Aorta (tissue), 5 donors: ENCODE measurements at regions of chr2 and their contacts with region 1.

Region 1: DNA sequence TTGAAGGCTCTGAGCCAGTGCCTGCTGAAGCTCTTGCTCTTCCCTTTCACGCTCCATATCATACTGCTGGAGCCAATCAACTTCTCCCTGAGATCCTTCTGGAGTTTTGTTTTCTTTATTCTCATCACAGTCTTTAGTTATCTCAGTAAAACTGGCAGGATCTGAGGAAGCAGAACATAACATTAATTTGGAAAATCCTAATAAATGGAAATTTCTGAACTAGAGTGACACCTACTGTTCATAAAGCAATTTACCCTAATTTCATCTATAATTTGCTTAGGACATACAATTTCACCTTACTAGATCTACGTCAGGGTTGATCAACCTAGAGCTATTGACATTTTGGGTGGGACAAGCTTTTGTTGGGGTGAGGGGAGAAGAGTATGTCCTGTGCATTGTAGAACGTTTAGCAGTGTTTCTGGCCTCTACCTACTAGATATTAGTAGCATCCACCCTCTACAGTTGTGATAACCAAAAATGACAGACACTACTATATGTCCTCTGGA is 47.1 kb downstream of the VIL1 start:
- DNase-seq: no peak
- ATAC-seq: peak; percentile 48
- H3K4me3 ChIP-seq: no peak overlapping the region
- H3K27ac ChIP-seq: no peak overlapping the region
- H3K4me1 ChIP-seq: no peaks in the 10 kb centered on the region
- H3K27me3 ChIP-seq: no peaks in the 10 kb centered on the region

Region 2: DNA sequence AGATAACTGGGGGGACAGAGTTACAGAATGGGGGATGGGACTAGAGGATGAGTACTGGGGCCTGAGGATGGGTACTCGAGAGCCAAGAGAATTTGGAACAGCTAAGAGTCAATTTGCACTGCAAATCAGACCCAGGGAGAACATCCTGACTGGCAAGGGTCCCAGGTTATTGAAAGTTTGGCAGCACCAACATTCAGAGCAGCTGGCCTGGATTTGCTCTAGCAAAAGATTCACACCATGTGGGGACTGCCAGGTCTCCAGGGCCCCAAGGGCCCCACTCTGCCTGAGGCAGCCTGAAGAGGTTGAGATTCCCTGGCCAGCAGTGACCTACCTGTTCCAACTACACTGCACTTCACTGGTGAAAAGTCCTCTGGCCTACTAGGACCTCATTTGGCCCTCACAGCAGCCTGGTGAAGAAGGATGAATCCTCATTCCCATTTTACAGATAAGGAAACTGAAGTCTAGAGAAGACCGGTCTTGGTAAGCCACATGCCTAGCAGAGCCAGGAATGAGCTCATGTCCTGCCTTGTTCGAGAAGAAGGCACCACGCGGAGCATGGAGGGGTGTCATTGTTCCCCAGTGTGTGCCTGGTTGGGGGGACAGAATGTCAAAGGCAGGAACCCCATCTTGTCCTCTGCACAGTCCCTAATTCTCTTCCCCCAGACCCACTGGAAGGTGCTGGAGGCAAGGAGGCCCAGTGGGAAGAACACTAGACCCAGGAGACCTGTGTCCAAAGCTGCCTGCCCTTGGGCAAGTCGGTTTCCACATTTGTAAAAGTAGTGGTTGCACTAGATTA is 721.9 kb before region 1 on chr2:
- intact Hi-C with region 1: no loop called
- DNase-seq: no peak
- ATAC-seq: no peak
- H3K4me3 ChIP-seq: no peak overlapping the region
- H3K27ac ChIP-seq: peak overlapping the region in 1 of 2 donors; percentile 1
- H3K4me1 ChIP-seq: peaks cover 2 to 9% of the 10 kb centered on the region in 2 donors
- H3K27me3 ChIP-seq: no peaks in the 10 kb centered on the region

Region 3: DNA sequence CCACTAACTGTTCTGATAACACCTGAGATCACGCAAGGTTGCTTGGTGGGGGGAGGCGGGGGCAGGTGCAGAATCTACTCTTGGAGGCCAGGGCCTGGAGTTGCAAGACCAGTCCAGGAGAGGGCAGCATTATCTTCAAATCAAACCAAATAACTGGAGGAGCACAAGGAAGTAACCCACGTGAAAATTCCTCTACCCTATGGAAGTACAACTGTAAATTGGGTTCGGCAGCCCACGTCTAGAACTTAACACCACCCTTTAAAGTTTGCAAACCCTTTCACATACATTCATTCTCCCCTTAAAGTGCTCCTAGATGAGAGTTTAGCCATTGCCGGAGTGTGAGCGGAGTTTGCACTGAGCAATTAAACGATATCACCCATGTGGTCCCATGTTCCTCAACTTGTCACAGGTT is 279.7 kb before region 1 on chr2:
- intact Hi-C with region 1: loop called (anchors 5 kb)
- DNase-seq: peak; percentile 70 to 83
- ATAC-seq: peak; percentile 89
- H3K4me3 ChIP-seq: no peak overlapping the region
- H3K27ac ChIP-seq: no peak overlapping the region
- H3K4me1 ChIP-seq: peaks cover 0 to 3% of the 10 kb centered on the region in 2 donors
- H3K27me3 ChIP-seq: no peaks in the 10 kb centered on the region

Region 4: DNA sequence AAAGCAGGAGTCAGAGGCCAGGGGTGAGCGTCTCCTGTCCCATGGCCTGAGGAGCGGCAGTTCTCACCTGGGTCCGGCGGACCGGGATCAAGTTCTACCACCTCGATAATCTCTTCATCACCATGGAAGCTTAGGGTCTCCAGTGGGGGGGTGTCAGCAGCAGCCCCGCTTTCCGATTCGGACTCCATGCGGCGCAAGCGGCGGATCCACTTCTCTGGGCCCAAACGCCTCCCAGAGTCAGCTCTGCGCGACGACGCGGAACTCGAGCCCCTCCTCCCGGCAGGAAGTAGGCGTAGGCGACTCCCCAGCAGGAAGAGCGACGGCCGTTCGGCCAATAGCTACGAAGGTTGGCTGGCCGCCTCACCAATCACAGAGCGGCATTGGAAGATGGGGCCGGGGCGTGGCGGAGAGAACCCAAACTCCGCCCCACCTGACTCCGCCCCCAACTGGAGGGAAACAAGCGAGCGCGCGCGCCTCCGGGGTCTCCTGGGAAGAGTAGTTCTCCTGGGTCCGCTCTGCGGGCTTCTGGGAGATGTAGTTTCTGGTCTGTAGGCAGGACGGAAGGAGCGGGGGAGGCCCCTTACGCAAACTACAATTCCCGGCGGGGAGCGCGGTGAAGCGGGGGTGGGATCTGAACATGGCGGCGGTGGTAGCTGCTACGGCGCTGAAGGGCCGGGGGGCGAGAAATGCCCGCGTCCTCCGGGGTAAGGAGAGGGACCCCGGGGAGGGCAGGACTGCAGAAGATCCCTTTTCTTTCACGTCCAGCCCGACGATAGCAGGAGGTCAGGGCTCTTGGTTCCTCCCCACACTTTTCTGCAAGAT is 196.0 kb before region 1 on chr2 and contains the starts of genes AAMP and PNKD:
- intact Hi-C with region 1: loop called (anchors 5 to 10 kb)
- DNase-seq: peak; percentile 100
- ATAC-seq: peak; percentile 97
- H3K4me3 ChIP-seq: peak within 1 kb of the TSS; percentile 74 to 92
- H3K27ac ChIP-seq: peak within 1 kb of the TSS in 1 of 2 donors; percentile 9
- H3K4me1 ChIP-seq: no peaks in the 10 kb centered on the region
- H3K27me3 ChIP-seq: no peaks in the 10 kb centered on the region
- total RNA-seq, gene AAMP: 50.8 to 54.7 TPM
- total RNA-seq, gene PNKD: 26.9 to 40.2 TPM

Region 5: DNA sequence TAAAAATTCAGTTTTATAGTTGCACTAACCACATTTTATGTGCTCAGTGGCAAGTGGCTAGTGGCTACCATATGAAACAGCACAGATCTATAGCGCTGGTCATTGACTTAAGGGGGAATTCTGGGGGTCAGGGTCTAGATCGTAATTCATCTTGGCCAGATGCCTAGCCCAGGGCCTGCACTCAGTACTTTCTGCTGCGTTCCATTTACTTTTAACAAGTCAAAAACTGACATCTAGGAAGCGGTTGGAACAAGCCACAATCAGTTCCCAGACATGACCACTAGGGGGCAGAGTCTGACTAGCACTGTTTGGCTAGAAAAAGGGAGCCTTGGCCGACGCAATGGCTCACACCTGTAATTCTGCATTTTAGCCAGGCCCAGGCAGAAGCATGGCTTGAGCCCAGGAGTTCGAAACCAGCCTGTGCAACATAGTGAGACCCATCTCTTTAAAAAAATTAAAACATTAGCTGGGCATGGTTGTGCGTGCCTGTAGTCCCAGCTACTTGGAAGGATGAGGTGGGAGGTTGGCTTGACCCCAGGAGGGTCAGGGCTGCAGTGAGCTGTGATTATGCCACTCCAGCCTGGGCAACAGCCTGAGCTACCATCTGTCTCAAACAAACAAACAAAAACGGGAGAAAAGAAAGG is 164.8 kb before region 1 on chr2:
- intact Hi-C with region 1: loop called in 1 of 2 experiments (anchors 5 kb)
- DNase-seq: peak; percentile 87 to 88
- ATAC-seq: peak; percentile 87
- H3K4me3 ChIP-seq: no peak overlapping the region
- H3K27ac ChIP-seq: no peak overlapping the region
- H3K4me1 ChIP-seq: peaks cover 0 to 2% of the 10 kb centered on the region in 2 donors
- H3K27me3 ChIP-seq: no peaks in the 10 kb centered on the region

Region 6: GRCh38 chr2:218319813-218320365 is 146.2 kb before region 1 on chr2:
- intact Hi-C with region 1: loop called in 1 of 2 experiments (anchors 5 kb)
- DNase-seq: no peak
- ATAC-seq: no peak
- H3K4me3 ChIP-seq: no peak overlapping the region
- H3K27ac ChIP-seq: no peak overlapping the region
- H3K4me1 ChIP-seq: no peaks in the 10 kb centered on the region
- H3K27me3 ChIP-seq: no peaks in the 10 kb centered on the region

Region 7: GRCh38 chr2:218406209-218406948 is 59.7 kb before region 1 on chr2:
- intact Hi-C with region 1: loop called (anchors 2 to 5 kb)
- DNase-seq: peak; percentile 98 to 99
- ATAC-seq: peak; percentile 94
- H3K4me3 ChIP-seq: peak overlapping the region in 1 of 2 donors; percentile 16
- H3K27ac ChIP-seq: peak overlapping the region in 1 of 2 donors; percentile 78
- H3K4me1 ChIP-seq: no peaks in the 10 kb centered on the region
- H3K27me3 ChIP-seq: no peaks in the 10 kb centered on the region